ENCODE measurements at regions of chr6 and their contacts with region 1.

Region 1: DNA sequence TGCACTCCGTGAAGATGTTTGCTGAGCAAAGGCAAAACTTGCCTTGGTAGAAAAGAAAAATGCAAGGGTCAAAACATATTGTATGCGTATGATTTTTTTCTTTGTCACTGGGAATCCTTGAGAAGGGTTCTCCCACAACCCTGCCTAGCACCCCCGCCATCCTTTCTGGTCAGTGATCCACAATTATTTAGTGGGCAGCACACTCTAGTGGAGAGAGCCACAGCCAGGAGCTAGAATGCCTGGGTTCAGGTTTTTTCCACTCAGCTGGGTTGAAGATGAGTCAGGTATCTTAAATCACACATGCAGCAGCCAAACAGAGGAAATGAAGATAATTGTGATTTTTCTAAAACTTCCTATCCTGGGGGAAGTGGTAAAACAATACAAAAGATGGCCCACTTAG is 243.1 kb downstream of the PKHD1 start:
- DNase-seq: no peak
- H3K4me3 ChIP-seq: no peak overlapping the region
- H3K27ac ChIP-seq: no peak overlapping the region
- H3K4me1 ChIP-seq: no peaks in the 10 kb centered on the region
- H3K27me3 ChIP-seq: no peaks in the 10 kb centered on the region
- CTCF ChIP-seq: no peak

Region 2: DNA sequence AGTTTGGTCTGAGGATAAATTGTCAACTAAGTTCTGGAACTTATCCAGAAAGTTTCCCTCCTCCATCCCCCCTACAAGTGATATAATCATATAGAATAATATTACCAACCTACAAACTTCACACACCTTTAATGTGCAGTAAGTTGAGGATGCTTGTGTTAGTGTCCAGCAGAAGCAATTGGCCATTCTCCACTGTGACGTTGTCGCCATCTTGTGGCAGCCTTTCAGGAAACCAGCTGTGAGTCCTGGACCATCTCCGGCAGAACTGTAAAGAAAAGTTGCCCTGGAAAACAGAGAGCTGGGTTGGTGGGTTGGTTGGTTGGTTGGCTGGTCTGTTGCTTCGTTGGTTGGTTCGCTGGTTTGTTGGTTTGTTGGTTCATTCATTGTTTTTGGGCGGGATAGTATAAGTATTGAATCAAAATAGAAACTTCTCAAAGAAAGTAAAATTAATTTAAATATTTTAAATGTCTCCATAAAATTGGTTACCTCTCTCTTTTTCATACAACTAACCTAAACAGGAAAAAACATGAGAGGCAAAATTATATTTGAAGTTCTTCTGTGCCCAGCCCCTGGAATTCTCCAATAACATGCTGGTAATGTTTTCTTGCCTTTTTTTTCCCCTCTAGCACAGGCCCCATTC is 115.5 kb after region 1 on chr6:
- intact Hi-C with region 1: loop called (anchors 5 kb)
- DNase-seq: peak in 1 of 2 donors; percentile 66
- H3K4me3 ChIP-seq: no peak overlapping the region
- H3K27ac ChIP-seq: no peak overlapping the region
- H3K4me1 ChIP-seq: no peaks in the 10 kb centered on the region
- H3K27me3 ChIP-seq: no peaks in the 10 kb centered on the region
- CTCF ChIP-seq: peak in 2 of 3 experiments; percentile 42 to 55